ENCODE measurements at regions of chr18 and their contacts with region 1.

Region 1: DNA sequence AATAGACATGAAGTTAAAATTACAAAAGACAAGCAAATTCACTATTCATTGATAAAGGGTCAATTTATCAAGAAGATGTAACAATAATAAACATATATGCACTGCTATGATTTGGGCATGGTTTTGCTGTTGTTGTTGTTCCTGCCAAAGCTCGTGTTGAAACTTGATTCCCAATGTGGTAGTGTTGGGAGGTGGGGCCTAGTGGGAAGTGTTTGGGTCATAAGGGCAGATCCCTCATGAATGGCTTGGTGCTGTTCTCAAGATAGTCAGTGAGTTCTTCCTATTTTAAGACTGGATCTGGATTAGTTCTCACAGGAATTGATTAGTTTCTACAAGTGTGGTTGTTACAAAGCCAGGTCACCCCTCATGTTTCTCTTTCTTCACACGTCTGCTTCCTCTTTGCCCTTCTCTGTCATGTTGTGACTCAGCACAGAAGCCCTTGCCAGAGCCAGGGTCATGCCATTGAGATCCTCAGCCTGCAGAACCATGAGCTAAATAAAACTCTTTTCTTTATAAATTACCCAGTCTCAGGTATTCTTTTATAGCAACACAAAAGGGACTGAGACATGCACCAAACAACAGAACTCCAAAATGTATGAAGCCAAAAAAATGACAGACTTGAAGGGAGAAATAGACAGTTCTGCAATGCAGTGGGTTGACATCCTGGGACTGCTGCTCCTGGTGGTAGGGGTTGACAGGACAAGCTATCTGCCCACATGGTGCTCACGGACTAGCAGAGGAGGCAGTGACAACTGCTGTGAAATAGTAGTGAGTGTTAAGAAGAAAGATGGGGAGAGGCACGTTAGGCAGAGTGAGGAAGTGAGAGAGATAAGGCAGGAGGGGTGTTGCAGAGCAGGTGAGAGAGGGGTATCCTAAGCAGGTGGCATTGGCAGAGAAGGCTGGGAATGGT is 18.6 kb upstream of the SKA1 start:
- DNase-seq: no peak
- H3K4me3 ChIP-seq: no peak overlapping the region
- H3K4me3 Mint-ChIP-seq: peak overlapping the region in 4 of 7 donors; percentile 9 to 54 (median 28)
- H3K27ac ChIP-seq: no peak overlapping the region
- H3K27ac Mint-ChIP-seq: peak overlapping the region in 5 of 8 donors; percentile 2 to 94 (median 24)
- H3K4me1 ChIP-seq: peaks cover 5% of the 10 kb centered on the region
- H3K4me1 Mint-ChIP-seq: peaks cover 8 to 15% (median 10%) of the 10 kb centered on the region in 3 donors
- H3K27me3 ChIP-seq: no peaks in the 10 kb centered on the region
- H3K27me3 Mint-ChIP-seq: peaks cover 18 to 36% of the 10 kb centered on the region in 2 donors

Region 2: GRCh38 chr18:50009773-50010335 is 346.4 kb before region 1 on chr18:
- CTCF ChIA-PET with region 1: interaction called, 15 read pairs
- POLR2A ChIA-PET with region 1: no interaction called
- DNase-seq: peak; percentile 5 to 49 (median 6)
- H3K4me3 ChIP-seq: no peak overlapping the region
- H3K4me3 Mint-ChIP-seq: no peak overlapping the region
- H3K27ac ChIP-seq: no peak overlapping the region
- H3K27ac Mint-ChIP-seq: no peak overlapping the region
- H3K4me1 ChIP-seq: no peaks in the 10 kb centered on the region
- H3K4me1 Mint-ChIP-seq: no peaks in the 10 kb centered on the region
- H3K27me3 ChIP-seq: no peaks in the 10 kb centered on the region
- H3K27me3 Mint-ChIP-seq: peaks cover 1 to 4% of the 10 kb centered on the region in 2 donors

Region 3: DNA sequence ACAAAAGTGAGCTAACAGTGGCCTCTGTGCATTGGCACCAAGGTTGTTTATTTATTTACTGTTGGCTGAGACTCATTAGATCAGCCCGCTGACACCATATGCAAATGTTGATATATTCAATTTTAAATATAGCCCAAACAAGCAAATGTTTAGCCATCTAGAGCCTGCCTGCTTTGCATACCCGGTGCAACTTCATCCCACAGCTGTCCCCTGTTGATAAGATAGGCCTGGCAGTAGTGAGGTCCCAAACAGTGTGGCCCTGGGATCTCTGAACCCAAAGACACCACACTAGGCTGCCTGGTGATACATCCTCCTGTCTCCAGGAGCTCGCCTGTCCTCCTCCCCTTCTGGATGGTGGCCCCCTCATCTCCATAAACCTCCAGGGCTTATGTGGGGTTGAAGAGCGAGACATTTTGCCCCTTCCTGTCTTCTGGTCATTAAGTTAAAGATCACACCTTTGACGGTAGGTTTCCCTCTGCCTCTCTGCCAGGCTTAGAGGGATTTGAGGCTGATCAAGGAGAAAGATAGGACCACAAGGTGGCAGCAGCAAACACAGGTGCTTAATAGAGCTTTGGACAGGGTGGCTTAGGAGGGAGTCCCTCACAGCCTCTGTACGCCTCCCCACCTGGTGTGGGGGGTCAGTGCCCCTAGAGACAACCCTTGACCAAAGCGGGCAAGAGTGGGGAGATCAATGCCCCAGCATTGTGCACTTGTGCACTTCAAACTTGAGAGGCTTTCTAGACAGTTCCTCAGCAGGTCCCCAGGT is 137.7 kb before region 1 on chr18:
- CTCF ChIA-PET with region 1: interaction called, 45 read pairs
- POLR2A ChIA-PET with region 1: no interaction called
- DNase-seq: peak in 3 of 5 donors; percentile 11 to 17 (median 16)
- H3K4me3 ChIP-seq: no peak overlapping the region
- H3K4me3 Mint-ChIP-seq: no peak overlapping the region
- H3K27ac ChIP-seq: no peak overlapping the region
- H3K27ac Mint-ChIP-seq: no peak overlapping the region
- H3K4me1 ChIP-seq: no peaks in the 10 kb centered on the region
- H3K4me1 Mint-ChIP-seq: no peaks in the 10 kb centered on the region
- H3K27me3 ChIP-seq: no peaks in the 10 kb centered on the region
- H3K27me3 Mint-ChIP-seq: peaks cover 25 to 57% of the 10 kb centered on the region in 2 donors

Region 4: DNA sequence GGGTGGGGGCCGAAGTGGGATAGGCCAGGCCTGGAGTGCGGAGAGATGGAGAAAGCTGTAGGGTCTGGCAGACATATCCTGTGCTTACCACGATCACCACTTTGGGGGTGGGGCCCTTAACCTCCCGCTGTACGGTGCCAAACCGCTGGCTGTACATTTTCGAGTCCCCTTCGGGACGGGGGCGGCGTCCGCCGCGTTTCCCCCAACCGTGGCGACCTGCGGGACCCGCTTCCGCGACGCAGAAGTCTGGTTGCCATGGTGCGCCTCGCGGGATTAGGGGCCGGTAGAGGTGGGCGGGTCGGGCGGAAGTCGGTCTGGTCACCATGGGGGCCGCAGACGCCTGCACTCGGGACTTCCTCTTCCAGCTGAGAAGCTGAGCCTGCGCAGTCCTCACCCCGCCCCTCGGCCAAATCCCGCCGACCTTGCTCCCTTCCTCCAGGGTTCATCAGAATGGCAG is 90.0 kb before region 1 on chr18 and contains the start of gene CFAP53:
- CTCF ChIA-PET with region 1: interaction called, 20 read pairs
- POLR2A ChIA-PET with region 1: no interaction called
- DNase-seq: peak; percentile 78 to 90 (median 84)
- H3K4me3 ChIP-seq: peak within 1 kb of the TSS; percentile 71
- H3K4me3 Mint-ChIP-seq: peak within 1 kb of the TSS; percentile 85 to 92 (median 89)
- H3K27ac ChIP-seq: peak within 1 kb of the TSS; percentile 57
- H3K27ac Mint-ChIP-seq: peak within 1 kb of the TSS; percentile 77 to 96 (median 94)
- H3K4me1 ChIP-seq: peaks cover 22% of the 10 kb centered on the region
- H3K4me1 Mint-ChIP-seq: peaks cover 12 to 29% (median 24%) of the 10 kb centered on the region in 3 donors
- H3K27me3 ChIP-seq: no peaks in the 10 kb centered on the region
- H3K27me3 Mint-ChIP-seq: peaks cover 0 to 1% of the 10 kb centered on the region in 2 donors
- total RNA-seq, gene CFAP53: 0.49 to 0.53 TPM

Region 5: DNA sequence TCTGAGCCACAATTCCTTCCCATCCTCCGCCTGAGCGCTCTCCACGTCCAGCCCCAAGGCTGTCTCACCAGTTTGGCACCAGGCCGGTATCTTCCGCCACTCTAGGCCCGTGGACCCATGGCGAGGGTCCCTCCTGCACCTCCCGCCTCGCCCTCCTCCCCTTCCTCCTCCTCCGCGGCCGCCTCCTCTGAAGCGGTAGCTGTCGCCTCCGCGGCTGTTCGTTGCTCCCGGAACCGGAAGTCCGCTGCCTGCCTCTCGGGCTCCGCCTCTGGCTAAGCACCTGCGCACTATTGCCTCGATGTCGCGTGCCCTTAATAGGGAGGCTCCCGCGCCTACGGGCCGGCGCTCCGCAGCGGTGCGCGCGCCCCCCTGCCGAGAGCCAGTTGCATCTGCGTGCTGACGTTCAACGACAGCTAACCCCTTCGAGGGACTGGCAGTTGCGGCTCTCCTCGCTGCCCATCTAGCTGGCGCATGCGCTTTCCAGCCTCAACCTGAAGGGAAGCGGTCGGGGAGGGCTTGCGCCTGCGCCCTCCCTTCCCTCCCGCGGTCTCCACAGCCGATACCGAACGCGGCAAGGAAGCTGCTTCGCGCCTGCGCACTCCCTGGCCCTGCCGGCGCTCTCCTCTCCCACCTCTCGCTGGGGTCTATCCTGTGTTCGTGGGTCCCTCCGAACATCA is 74.9 kb before region 1 on chr18 and contains the start of gene MBD1:
- CTCF ChIA-PET with region 1: interaction called, 12 read pairs
- POLR2A ChIA-PET with region 1: no interaction called
- DNase-seq: peak; percentile 96 to 99 (median 97)
- H3K4me3 ChIP-seq: peak within 1 kb of the TSS; percentile 90
- H3K4me3 Mint-ChIP-seq: peak within 1 kb of the TSS; percentile 95 to 98 (median 97)
- H3K27ac ChIP-seq: peak within 1 kb of the TSS; percentile 86
- H3K27ac Mint-ChIP-seq: peak within 1 kb of the TSS; percentile 89 to 100 (median 98)
- H3K4me1 ChIP-seq: peaks cover 35% of the 10 kb centered on the region
- H3K4me1 Mint-ChIP-seq: peaks cover 36 to 55% (median 41%) of the 10 kb centered on the region in 3 donors
- H3K27me3 ChIP-seq: no peaks in the 10 kb centered on the region
- H3K27me3 Mint-ChIP-seq: peaks cover 0 to 1% of the 10 kb centered on the region in 2 donors
- total RNA-seq, gene MBD1: 83.0 to 99.2 TPM

Region 6: DNA sequence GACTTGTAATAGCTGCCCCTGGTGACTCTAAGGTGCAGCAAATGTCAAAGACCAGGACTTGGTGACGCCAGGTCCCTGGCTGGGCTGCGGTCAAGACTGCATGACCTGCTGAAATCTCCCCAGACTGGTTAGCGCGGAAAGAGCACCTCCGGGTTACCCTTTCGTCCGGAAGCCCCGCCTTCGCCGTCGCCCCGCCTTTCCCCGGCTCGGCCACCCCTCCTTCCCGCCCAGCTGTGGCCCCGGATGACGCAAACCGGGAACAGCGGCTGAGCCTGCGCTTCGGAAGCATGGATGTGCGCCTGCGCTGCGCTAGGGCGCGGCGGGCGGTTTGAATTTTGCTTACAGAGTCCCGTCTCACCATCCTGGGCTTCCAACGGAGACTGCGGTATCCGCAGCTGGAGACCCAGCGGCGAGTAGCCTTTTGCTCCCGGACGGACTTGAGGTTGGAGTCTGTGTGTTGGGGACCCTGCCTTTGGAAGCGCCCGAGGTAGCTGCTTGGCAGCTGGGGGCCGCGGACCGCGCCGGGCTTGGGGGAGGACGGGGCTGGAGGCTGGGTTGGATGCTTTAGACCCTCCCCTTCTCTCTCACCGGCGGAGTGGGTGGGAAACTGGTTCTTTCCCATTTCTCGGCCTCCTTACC is 18.6 kb after region 1 on chr18 and contains the start of gene SKA1:
- CTCF ChIA-PET with region 1: interaction called, 14 read pairs
- POLR2A ChIA-PET with region 1: interaction called, 3 read pairs
- DNase-seq: peak; percentile 87 to 93 (median 89)
- H3K4me3 ChIP-seq: peak within 1 kb of the TSS; percentile 81
- H3K4me3 Mint-ChIP-seq: peak within 1 kb of the TSS; percentile 79 to 88 (median 81)
- H3K27ac ChIP-seq: peak within 1 kb of the TSS; percentile 68
- H3K27ac Mint-ChIP-seq: peak within 1 kb of the TSS; percentile 80 to 95 (median 85)
- H3K4me1 ChIP-seq: peaks cover 13% of the 10 kb centered on the region
- H3K4me1 Mint-ChIP-seq: peaks cover 8 to 18% (median 15%) of the 10 kb centered on the region in 3 donors
- H3K27me3 ChIP-seq: peaks cover 6% of the 10 kb centered on the region
- H3K27me3 Mint-ChIP-seq: peaks cover 8 to 16% of the 10 kb centered on the region in 2 donors
- total RNA-seq, gene SKA1: 26.5 to 28.7 TPM

Region 7: DNA sequence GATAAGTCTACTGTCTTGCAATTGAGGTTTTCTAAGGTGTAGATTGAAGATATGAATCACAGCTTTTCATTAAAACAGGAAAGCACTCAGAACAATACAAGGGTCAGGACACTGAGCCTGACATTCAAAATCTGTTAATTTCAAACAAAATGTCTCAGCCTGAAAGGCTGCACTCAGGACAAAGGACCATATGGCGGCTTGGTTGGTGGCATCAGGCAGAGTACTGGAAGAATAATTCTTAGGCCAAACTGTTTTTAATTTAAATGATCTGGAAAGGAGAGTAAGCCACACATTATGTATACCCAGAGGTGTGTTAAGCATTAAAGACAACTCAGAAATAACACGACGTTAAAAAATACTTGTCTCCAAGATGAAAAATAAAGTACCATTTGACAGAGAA is 104.4 kb after region 1 on chr18:
- CTCF ChIA-PET with region 1: no interaction called
- POLR2A ChIA-PET with region 1: no interaction called
- DNase-seq: no peak
- H3K4me3 ChIP-seq: no peak overlapping the region
- H3K4me3 Mint-ChIP-seq: no peak overlapping the region
- H3K27ac ChIP-seq: no peak overlapping the region
- H3K27ac Mint-ChIP-seq: no peak overlapping the region
- H3K4me1 ChIP-seq: no peaks in the 10 kb centered on the region
- H3K4me1 Mint-ChIP-seq: no peaks in the 10 kb centered on the region
- H3K27me3 ChIP-seq: no peaks in the 10 kb centered on the region
- H3K27me3 Mint-ChIP-seq: peaks cover 5 to 7% of the 10 kb centered on the region in 2 donors